ENCODE measurements at regions of chr10 and their contacts with region 1.

Region 1: DNA sequence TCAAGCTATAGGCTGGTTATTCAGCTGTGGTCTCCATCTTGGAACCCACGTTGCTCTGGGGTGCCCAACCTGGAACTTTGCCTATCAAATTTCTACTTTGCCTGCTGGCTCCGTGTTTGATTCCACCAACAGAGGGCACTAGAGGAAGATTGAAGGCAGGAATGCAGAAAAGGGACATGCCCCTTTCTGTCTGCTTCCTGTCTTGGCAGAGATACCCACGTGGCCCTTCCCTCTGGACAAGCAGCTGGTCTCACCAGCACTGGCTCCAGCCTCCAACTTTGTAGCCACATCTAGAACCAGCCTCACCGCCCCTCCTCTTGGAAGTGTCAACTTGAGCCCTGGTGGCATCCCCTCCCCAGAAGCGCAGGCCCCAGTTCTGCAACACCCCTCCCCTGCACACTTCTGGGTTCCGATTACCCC is 52.1 kb upstream of the ZNF438 start:
- DNase-seq: peak; percentile 79
- H3K4me3 Mint-ChIP-seq: no peak overlapping the region
- H3K27ac Mint-ChIP-seq: no peak overlapping the region
- H3K4me1 Mint-ChIP-seq: peaks cover 3% of the 10 kb centered on the region
- H3K27me3 Mint-ChIP-seq: no peaks in the 10 kb centered on the region

Region 2: DNA sequence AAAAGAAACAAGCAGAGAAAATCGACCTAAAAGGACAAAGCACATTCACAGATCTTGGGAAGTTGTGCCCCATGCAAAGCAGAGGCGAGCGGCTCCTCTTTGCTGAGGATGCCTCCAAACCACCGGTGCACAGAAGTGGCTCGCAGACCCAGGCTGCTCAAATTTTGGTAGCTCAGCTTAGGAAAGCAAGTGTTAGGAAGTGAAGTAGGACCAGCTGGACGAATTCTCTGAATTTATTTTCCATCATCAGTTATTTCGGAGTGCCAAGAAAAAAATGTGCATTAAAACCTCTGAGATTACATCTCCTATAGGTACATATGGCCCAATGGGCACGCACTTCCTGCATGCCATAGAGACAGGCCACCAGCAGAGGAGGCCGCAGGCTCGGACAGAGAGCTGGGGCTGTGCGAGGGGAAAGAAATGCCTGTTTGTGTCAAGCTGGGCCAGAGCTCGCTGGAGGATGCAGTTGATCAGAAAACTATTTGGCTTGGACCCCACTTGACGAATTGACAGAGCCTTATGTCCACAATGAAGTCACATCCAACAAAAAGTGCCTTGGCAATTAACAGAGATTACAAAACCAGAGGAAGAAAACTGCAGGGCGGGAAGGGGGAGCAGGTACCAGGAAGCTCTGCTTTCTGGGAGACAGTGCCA is 332.0 kb before region 1 on chr10:
- CTCF ChIA-PET with region 1: interaction called, 5 read pairs
- POLR2A ChIA-PET with region 1: no interaction called
- intact Hi-C with region 1: loop called (anchors 5 kb)
- DNase-seq: peak; percentile 77
- H3K4me3 Mint-ChIP-seq: no peak overlapping the region
- H3K27ac Mint-ChIP-seq: peak overlapping the region; percentile 24
- H3K4me1 Mint-ChIP-seq: peaks cover 41% of the 10 kb centered on the region
- H3K27me3 Mint-ChIP-seq: peaks cover 3% of the 10 kb centered on the region

Region 3: GRCh38 chr10:30783939-30784500 is 299.8 kb before region 1 on chr10:
- CTCF ChIA-PET with region 1: interaction called, 23 read pairs
- POLR2A ChIA-PET with region 1: no interaction called
- intact Hi-C with region 1: loop called (anchors 1 kb)
- DNase-seq: peak; percentile 91
- H3K4me3 Mint-ChIP-seq: peak overlapping the region; percentile 62
- H3K27ac Mint-ChIP-seq: peak overlapping the region; percentile 45
- H3K4me1 Mint-ChIP-seq: peaks cover 18% of the 10 kb centered on the region
- H3K27me3 Mint-ChIP-seq: no peaks in the 10 kb centered on the region

Region 4: DNA sequence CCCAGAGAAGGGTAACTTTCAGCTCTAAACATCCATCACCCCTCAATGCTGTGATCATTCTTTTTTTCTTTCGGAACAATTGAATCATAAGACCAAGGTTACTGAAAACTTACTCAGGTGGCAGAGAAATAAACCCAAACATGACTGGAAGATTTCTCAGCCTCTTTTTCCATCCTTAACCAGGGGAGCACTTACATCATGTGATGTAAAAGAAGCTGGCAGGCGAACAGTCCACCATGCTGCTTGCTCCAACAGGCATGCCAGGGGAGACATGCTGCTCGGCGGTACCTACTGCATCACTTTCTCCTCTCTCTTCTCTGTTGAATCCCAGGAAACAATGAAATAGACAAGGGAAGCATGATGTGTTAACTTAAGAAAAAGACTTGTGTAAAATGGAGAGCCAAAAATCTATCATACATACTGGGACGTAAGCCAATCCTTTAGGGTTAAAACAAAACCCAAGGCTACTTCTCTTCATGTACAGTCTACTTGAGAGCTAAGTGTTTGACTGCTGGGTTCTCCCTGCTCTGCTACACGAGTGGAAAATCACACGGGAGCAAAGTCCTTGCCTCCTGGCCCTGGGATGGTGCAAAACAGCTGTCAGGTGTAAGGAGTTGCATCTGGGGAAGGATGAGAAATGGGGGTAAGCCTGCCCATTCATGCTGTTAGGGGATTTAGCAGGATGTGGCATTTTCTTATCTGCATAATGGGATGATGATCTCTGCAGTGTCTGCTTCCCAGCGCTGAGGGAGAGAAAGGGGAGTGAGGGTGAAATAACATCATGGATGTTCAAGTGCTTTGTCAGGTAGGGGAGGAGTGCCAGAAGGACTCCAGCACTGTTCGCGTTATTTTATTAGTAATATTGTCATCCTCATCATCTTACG is 12.1 kb after region 1 on chr10:
- CTCF ChIA-PET with region 1: interaction called, 21 read pairs
- POLR2A ChIA-PET with region 1: no interaction called
- intact Hi-C with region 1: no loop called
- DNase-seq: no peak
- H3K4me3 Mint-ChIP-seq: no peak overlapping the region
- H3K27ac Mint-ChIP-seq: peak overlapping the region; percentile 15
- H3K4me1 Mint-ChIP-seq: peaks cover 33% of the 10 kb centered on the region
- H3K27me3 Mint-ChIP-seq: no peaks in the 10 kb centered on the region

Region 5: DNA sequence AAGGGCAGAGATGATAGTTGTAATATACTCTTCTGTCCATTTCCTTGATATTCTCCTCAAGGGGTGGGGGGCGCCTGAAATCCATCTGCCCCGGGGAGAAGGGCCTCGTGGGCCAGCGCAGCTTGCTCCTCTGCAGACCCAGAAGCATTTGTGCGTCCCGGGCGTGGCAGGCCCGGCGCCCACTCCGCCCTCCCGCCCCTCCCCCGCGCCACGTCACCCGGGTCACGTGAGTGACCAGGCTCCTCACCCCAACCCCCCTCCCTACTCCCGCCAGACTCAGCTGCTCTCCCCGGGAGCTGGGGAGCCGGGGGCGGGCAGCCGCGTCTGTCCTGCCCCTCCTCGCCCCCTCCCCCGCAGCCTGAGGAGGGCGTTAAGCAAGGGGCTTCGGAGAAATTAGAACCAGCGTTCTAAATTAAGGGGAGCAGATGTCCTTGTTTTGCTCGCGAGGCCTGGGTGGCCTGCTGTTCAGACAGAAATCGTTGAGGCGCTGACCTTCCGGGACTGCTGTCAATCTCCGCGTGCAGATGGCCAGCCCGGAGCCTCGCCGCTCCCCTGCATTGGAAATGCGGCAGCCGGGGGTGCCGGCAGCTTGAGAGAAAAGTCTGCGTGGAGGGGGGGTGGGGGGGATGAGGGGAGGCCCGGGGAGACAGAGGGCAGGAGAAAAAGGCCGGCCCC is 50.0 kb after region 1 on chr10:
- CTCF ChIA-PET with region 1: interaction called, 5 read pairs
- POLR2A ChIA-PET with region 1: no interaction called
- intact Hi-C with region 1: loop called (anchors 10 kb)
- DNase-seq: peak; percentile 83
- H3K4me3 Mint-ChIP-seq: peak overlapping the region; percentile 65
- H3K27ac Mint-ChIP-seq: peak overlapping the region; percentile 62
- H3K4me1 Mint-ChIP-seq: peaks cover 42% of the 10 kb centered on the region
- H3K27me3 Mint-ChIP-seq: no peaks in the 10 kb centered on the region

Region 6: GRCh38 chr10:31490858-31491504 is 407.2 kb after region 1 on chr10:
- CTCF ChIA-PET with region 1: interaction called, 10 read pairs
- POLR2A ChIA-PET with region 1: no interaction called
- intact Hi-C with region 1: loop called (anchors 2 kb)
- DNase-seq: no peak
- H3K4me3 Mint-ChIP-seq: no peak overlapping the region
- H3K27ac Mint-ChIP-seq: no peak overlapping the region
- H3K4me1 Mint-ChIP-seq: no peaks in the 10 kb centered on the region
- H3K27me3 Mint-ChIP-seq: no peaks in the 10 kb centered on the region